ENCODE measurements at regions of chr1 and their contacts with region 1.

Region 1: GRCh38 chr1:145858894-145859490 is at the start of gene PIAS3:
- DNase-seq: peak; percentile 95
- ATAC-seq: peak; percentile 88
- H3K4me3 ChIP-seq: peak within 1 kb of the TSS; percentile 79
- H3K27ac ChIP-seq: peak within 1 kb of the TSS; percentile 10
- H3K4me1 ChIP-seq: peaks cover 11% of the 10 kb centered on the region
- H3K27me3 ChIP-seq: no peaks in the 10 kb centered on the region
- CTCF ChIP-seq: no peak
- total RNA-seq, gene PIAS3: 25.2 and 27.2 TPM in 2 replicates

Region 2: GRCh38 chr1:145688328-145688727 is 170.7 kb before region 1 on chr1:
- CTCF ChIA-PET with region 1: no interaction called
- POLR2A ChIA-PET with region 1: no interaction called
- intact Hi-C with region 1: no loop called
- DNase-seq: no peak
- ATAC-seq: no peak
- H3K4me3 ChIP-seq: no peak overlapping the region
- H3K27ac ChIP-seq: no peak overlapping the region
- H3K4me1 ChIP-seq: peaks cover 11% of the 10 kb centered on the region
- H3K27me3 ChIP-seq: no peaks in the 10 kb centered on the region
- CTCF ChIP-seq: no peak

Region 3: GRCh38 chr1:145804235-145805045 is 54.6 kb before region 1 on chr1:
- CTCF ChIA-PET with region 1: no interaction called
- POLR2A ChIA-PET with region 1: no interaction called
- intact Hi-C with region 1: no loop called
- DNase-seq: no peak
- ATAC-seq: no peak; the same call in 1 of the 2 replicates
- H3K4me3 ChIP-seq: no peak overlapping the region
- H3K27ac ChIP-seq: peak overlapping the region; percentile 59
- H3K4me1 ChIP-seq: peaks cover 26% of the 10 kb centered on the region
- H3K27me3 ChIP-seq: no peaks in the 10 kb centered on the region
- CTCF ChIP-seq: no peak

Region 4: GRCh38 chr1:145845514-145846161 is 13.4 kb before region 1 on chr1 and contains the start of gene NUDT17:
- CTCF ChIA-PET with region 1: interaction called, 29 read pairs
- POLR2A ChIA-PET with region 1: interaction called, 8 read pairs
- intact Hi-C with region 1: no loop called
- DNase-seq: peak; percentile 78
- ATAC-seq: peak; percentile 77
- H3K4me3 ChIP-seq: peak within 1 kb of the TSS; percentile 66
- H3K27ac ChIP-seq: no peak within 1 kb of the TSS
- H3K4me1 ChIP-seq: peaks cover 5% of the 10 kb centered on the region; the same call in 1 of the 2 replicates
- H3K27me3 ChIP-seq: no peaks in the 10 kb centered on the region
- CTCF ChIP-seq: peak; percentile 98
- total RNA-seq, gene NUDT17: 2.4 and 3.0 TPM in 2 replicates

Region 5: GRCh38 chr1:145918144-145918992 is 59.4 kb after region 1 on chr1 and contains the start of gene PEX11B:
- CTCF ChIA-PET with region 1: no interaction called
- POLR2A ChIA-PET with region 1: no interaction called
- intact Hi-C with region 1: loop called (anchors 2 kb)
- DNase-seq: peak; percentile 86
- ATAC-seq: peak; percentile 79
- H3K4me3 ChIP-seq: peak within 1 kb of the TSS; percentile 81
- H3K27ac ChIP-seq: peak within 1 kb of the TSS; percentile 72
- H3K4me1 ChIP-seq: peaks cover 24% of the 10 kb centered on the region
- H3K27me3 ChIP-seq: no peaks in the 10 kb centered on the region
- CTCF ChIP-seq: no peak
- total RNA-seq, gene PEX11B: 27.4 and 31.3 TPM in 2 replicates

Region 6: GRCh38 chr1:145927063-145927886 is 68.3 kb after region 1 on chr1 and contains the start of gene RBM8A:
- CTCF ChIA-PET with region 1: no interaction called
- POLR2A ChIA-PET with region 1: interaction called, 6 read pairs
- intact Hi-C with region 1: loop called (anchors 2 kb)
- DNase-seq: peak; percentile 99
- ATAC-seq: peak; percentile 99
- H3K4me3 ChIP-seq: peak within 1 kb of the TSS; percentile 75
- H3K27ac ChIP-seq: peak within 1 kb of the TSS; percentile 83
- H3K4me1 ChIP-seq: peaks cover 13% of the 10 kb centered on the region
- H3K27me3 ChIP-seq: no peaks in the 10 kb centered on the region
- CTCF ChIP-seq: peak; percentile 81
- total RNA-seq, gene RBM8A: 459 and 482 TPM in 2 replicates

Region 7: DNA sequence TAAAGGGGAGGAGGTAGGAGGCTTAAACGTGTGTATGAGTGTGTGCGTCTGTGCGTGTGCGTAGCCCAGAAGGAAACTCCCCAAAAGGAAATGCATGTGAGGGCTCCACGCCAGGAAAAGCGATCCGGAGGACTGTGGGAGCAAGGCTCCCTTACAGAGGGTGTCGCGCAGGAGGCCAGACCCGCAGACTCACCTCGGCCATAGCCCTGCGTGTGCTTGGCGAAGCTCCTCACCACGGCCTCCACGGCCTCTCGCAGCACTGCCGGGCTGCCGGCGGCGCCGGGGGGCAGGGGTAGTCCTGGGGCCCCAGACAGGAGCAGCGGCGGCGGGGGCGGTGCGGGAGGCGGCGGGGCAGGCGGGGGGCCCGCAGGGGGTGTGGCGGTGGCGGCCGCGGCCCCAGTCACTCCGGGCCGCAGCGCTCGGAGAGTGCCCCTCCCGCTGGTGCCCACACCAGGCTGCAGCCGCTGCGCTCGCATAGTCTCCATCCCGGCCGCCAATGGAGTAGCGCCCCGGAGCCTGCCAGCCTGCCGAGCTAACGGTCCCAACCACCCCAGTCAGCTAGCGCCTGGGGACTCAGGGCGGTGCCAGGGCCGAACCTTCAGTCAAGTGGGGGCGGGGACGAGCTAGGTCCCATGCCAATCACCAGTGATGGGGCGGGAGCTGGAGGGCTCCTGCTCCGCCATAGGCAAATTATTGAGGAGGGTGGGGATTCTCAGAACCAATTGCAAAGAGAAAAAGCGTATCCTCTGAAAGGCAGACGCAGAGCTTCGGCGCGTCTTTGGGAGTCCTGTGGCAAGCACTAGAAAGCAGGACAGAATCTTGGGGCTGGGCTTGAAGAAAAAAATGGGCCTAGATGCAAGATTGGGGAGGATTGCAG is 98.7 kb after region 1 on chr1 and contains the start of gene LIX1L:
- CTCF ChIA-PET with region 1: no interaction called
- POLR2A ChIA-PET with region 1: interaction called, 7 read pairs
- intact Hi-C with region 1: loop called (anchors 2 kb)
- DNase-seq: peak; percentile 99
- ATAC-seq: peak; percentile 81
- H3K4me3 ChIP-seq: peak within 1 kb of the TSS; percentile 76
- H3K27ac ChIP-seq: 0 out of 2 replicates have a peak within 1 kb of the TSS, but pooled peaks have one; percentile 1
- H3K4me1 ChIP-seq: peaks cover 43% of the 10 kb centered on the region
- H3K27me3 ChIP-seq: no peaks in the 10 kb centered on the region
- CTCF ChIP-seq: no peak
- total RNA-seq, gene LIX1L: 12.5 and 13.6 TPM in 2 replicates

Region 8: GRCh38 chr1:145963995-145964901 is 105.3 kb after region 1 on chr1 and contains the starts of genes ANKRD34A and POLR3GL:
- CTCF ChIA-PET with region 1: interaction called, 6 read pairs
- POLR2A ChIA-PET with region 1: interaction called, 3 read pairs
- intact Hi-C with region 1: loop called (anchors 1 kb)
- DNase-seq: peak; percentile 99
- ATAC-seq: peak; percentile 84
- H3K4me3 ChIP-seq: peak within 1 kb of the TSS; percentile 76
- H3K27ac ChIP-seq: peak within 1 kb of the TSS; percentile 3; the same call in 1 of the 2 replicates
- H3K4me1 ChIP-seq: peaks cover 35% of the 10 kb centered on the region
- H3K27me3 ChIP-seq: no peaks in the 10 kb centered on the region
- CTCF ChIP-seq: no peak
- total RNA-seq, gene ANKRD34A: 0.29 and 2.8 TPM in 2 replicates
- total RNA-seq, gene POLR3GL: 3.7 and 8.4 TPM in 2 replicates

Measured in PC-3 (cell line).